ENCODE measurements at regions of chr12 and their contacts with region 1.

Region 1: DNA sequence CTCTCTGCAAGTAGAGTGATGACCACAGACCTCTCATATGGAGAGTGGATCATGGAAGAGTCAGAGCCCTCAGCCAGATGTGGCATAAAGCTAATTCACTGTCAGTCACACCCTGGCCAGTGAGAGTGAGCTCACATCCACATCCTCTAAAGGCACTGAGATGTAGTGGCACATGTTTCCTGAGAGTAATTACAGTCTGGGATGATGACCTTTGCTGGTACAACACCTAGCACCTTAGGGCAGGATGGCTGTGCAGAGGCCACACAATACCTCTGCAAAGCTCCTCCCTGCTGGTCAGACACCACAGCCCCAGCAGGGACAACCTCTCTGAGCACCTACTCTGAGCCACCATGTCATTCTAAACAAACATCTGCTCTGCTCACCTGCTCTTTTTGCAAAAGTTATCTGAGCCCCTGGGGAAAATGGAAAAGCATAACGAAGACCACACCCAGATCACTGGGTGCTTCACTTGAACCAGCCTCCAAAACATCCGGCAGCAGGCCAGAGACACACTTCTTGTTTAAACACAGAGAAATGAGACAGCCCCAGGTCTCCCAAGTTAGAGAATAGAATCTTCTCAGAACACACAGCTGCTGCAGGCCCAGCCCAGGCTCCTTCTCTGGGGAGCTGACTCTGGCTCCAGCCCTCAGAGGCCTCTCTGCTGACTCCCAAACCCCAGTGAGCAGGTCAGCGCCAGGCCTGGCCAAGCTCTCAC is 30.3 kb downstream of the PITPNM2 start:
- DNase-seq: peak; percentile 20
- H3K4me3 Mint-ChIP-seq: peak overlapping the region; percentile 37
- H3K27ac Mint-ChIP-seq: peak overlapping the region; percentile 84
- H3K4me1 Mint-ChIP-seq: peaks cover 55% of the 10 kb centered on the region
- H3K27me3 Mint-ChIP-seq: no peaks in the 10 kb centered on the region

Region 2: DNA sequence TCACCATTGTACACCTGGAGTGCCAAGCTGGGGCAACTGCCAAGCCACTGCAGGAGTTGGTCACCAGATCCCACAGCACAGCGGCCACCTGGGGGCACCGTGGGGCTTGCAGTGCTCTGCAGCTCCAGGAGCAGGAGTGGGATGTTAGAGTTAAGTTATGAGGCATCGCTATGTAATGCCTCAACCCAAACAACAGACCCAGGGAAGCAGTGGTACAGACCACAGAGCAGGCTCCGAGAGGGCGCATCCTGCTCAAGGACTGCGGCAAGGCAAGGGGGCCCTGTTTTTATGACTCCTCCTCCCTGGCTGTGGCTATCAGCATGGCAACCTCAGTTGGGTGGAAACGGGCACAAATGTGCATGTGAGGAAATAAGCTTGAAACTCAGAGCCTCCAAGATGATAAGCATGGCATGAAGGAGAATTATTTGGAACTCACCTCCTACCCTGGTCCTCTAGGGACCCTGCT is 77.0 kb before region 1 on chr12:
- intact Hi-C with region 1: loop called (anchors 5 kb)
- DNase-seq: peak; percentile 60
- H3K4me3 Mint-ChIP-seq: no peak overlapping the region
- H3K27ac Mint-ChIP-seq: peak overlapping the region; percentile 71
- H3K4me1 Mint-ChIP-seq: peaks cover 22% of the 10 kb centered on the region
- H3K27me3 Mint-ChIP-seq: no peaks in the 10 kb centered on the region

Region 3: DNA sequence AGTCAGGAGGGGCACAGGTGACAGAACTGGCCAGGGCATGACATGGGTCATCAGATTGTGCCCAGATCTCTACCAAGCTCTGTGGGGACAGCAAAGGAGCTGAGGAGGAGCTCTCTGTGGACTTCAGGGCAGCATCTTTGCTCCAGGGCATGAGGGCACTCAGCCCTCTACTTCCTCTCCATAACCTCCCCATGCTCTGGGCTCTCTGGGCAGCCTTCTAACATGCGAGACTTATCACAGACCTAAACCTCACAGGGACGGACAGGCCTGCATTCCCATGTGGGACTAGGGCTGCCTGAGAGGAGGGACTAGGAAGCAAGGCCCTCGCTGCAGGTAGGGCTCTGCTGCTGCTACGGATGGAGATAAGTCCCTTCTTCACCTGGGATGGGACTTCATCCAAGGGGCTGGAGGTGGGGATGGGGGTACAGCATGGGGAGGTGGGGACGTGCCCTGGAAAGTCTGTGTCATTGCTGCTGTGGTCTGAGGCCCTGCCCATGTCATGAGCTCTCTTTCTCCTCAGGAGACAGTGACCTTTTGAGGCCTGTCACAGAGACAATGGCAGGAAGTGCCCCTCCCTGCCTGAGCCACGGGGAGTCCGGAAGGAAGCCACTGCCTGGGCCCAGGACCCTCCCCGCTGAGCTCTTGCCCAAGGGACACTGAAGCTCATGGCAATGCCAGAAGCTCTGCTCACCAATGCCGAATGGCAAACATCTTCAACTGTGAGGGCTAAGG is 13.8 kb before region 1 on chr12:
- intact Hi-C with region 1: loop called (anchors 1 kb)
- DNase-seq: peak; percentile 73
- H3K4me3 Mint-ChIP-seq: peak overlapping the region; percentile 53
- H3K27ac Mint-ChIP-seq: peak overlapping the region; percentile 95
- H3K4me1 Mint-ChIP-seq: peaks cover 58% of the 10 kb centered on the region
- H3K27me3 Mint-ChIP-seq: no peaks in the 10 kb centered on the region

Region 4: DNA sequence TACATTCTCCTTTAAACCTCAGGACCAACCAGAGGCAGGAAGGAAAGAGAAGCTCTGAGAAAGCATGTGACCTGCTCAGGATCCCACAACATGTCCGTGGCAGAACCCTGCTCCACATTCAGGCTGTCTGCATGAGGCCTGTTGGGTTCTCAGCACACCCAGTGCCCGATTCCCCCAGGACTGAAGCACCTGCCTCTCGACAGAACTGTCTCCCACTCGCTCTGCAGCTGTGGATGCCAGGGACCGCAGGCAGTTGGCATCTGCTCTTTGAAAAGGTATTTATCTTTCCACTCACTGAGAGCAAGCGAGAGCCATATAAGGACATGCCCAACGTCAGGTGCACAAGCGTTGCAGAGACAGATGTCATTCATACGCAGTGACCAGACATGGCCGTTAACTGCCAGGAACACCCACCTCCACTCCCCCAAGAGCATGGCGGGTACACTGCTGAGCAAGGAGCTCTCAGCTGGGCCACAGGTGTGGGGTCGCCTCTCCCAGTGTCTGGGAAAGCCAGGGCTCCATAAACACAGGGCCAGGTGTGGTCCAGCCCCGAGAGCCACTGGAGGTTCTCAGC is 11.4 kb after region 1 on chr12:
- intact Hi-C with region 1: loop called (anchors 2 kb)
- DNase-seq: peak; percentile 32
- H3K4me3 Mint-ChIP-seq: peak overlapping the region; percentile 48
- H3K27ac Mint-ChIP-seq: peak overlapping the region; percentile 78
- H3K4me1 Mint-ChIP-seq: peaks cover 31% of the 10 kb centered on the region
- H3K27me3 Mint-ChIP-seq: no peaks in the 10 kb centered on the region

Region 5: GRCh38 chr12:123165537-123165936 is 44.9 kb after region 1 on chr12:
- intact Hi-C with region 1: loop called (anchors 5 kb)
- DNase-seq: no peak
- H3K4me3 Mint-ChIP-seq: no peak overlapping the region
- H3K27ac Mint-ChIP-seq: no peak overlapping the region
- H3K4me1 Mint-ChIP-seq: peaks cover 8% of the 10 kb centered on the region
- H3K27me3 Mint-ChIP-seq: no peaks in the 10 kb centered on the region

Region 6: GRCh38 chr12:123232807-123233543 is 112.4 kb after region 1 on chr12 and contains the starts of genes MPHOSPH9 and MTRFR:
- intact Hi-C with region 1: no loop called
- DNase-seq: peak; percentile 99
- H3K4me3 Mint-ChIP-seq: peak within 1 kb of the TSS; percentile 100
- H3K27ac Mint-ChIP-seq: peak within 1 kb of the TSS; percentile 99
- H3K4me1 Mint-ChIP-seq: peaks cover 68% of the 10 kb centered on the region
- H3K27me3 Mint-ChIP-seq: peaks cover 2% of the 10 kb centered on the region
- total RNA-seq, gene MPHOSPH9: 87.3 and 89.9 TPM in 2 replicates
- total RNA-seq, gene MTRFR: 32.6 and 34.2 TPM in 2 replicates

Measured in activated T-helper 1 cell treated with anti-CD3 and anti-CD28 coated beads, Interleukin-12 subunit alpha, Interleukin-12 subunit beta, Interleukin-2, Interleukin-4 antibody, amounts not matched to agents 30 ng/mL and 10 ng/mL and 1 ng/mL, durations not matched to agents 14 hours and 24 hours and 36 hours (primary cell).